Posterior vena cava (tissue), 2 donors: ENCODE measurements at regions of chr1 and their contacts with region 1.

Region 1: DNA sequence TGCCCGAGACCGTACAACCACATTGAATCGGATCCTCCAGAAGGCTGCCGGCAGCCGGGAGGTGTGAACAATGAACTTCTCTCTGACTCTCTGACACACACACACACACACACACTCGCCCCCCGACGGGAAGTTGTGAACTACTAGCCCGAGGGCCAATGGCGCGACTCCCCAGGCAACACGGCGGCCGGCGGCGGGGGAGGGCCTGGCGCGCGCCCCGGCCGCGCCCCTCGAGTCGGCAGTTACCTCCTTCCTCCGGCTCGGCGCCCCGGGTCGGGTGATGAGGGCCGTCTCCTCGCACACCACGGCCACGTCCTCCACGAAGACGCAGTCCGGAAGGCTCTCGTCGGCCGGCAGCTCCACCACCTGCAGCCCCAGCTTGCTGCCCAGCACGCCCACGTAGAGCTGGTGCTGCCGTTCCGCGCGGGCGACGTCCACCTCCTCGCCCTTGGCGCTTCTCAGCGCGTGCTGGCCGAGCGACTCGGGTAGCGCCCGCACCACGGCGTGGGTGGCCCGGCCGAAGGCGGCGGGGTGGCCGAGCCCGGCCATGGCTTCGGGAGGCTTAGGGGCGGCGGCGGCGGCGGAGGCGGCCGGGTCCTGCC is 361 bp downstream of the DDAH1 start:
- DNase-seq: peak; percentile 91

Region 2: GRCh38 chr1:85330711-85331290 is 133.8 kb before region 1 on chr1:
- intact Hi-C with region 1: loop called in 1 of 2 experiments (anchors 10 kb)
- DNase-seq: no peak

Region 3: GRCh38 chr1:85502625-85503083 is 38.1 kb after region 1 on chr1:
- intact Hi-C with region 1: no loop called
- DNase-seq: no peak